H1 (cell line): ENCODE measurements at regions of chr9 and their contacts with region 1.

Region 1: DNA sequence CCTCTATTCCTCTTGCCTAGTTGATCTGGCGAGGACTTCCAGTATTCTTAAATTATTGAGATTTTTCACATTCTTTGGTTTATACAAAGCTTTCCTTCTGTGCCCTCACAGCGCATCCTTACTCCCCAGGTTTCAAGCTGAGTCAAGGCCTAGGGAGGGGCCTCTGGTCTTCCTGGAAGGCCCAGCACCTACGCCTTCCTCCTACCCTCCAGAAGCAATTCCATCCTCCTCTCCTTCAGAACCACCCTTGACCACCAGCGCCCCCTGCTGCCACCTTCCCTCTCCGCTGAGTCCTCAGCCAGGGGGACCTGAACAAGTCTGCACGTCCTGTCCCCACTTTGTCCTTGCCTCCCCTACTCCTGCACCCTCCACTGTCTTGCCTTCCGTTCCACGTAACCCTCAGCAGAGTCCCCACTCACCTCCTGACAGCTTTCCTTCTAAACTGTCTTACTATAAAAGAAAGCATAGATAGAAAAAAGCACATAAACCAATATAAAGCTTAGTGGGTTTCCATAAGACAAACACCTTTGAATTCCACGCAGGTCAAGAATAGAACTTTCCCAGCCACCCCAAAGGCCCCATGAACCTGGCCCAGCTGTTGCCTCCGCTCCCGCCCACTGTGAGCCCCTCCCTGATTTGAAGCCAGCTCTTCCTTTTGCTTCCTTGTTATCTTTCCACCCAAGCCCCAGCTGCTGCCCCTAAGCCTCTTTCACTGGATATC is 63.0 kb upstream of the CTSL start:
- DNase-seq: peak; percentile 81 to 96
- H3K4me3 ChIP-seq: no peak overlapping the region
- H3K27ac ChIP-seq: no peak overlapping the region; the same call in 1 of the 2 replicates
- H3K4me1 ChIP-seq: peaks cover 0 to 14% (median 2%) of the 10 kb centered on the region in 4 experiments; a peak in 4 of 7 replicates
- H3K27me3 ChIP-seq: no peaks in the 10 kb centered on the region
- CTCF ChIP-seq: peak; percentile 83 to 98 (median 94)
- EP300 ChIP-seq: no peak
- POLR2A ChIP-seq: no peak
- RAD21 ChIP-seq: peak; percentile 90 to 92

Region 2: DNA sequence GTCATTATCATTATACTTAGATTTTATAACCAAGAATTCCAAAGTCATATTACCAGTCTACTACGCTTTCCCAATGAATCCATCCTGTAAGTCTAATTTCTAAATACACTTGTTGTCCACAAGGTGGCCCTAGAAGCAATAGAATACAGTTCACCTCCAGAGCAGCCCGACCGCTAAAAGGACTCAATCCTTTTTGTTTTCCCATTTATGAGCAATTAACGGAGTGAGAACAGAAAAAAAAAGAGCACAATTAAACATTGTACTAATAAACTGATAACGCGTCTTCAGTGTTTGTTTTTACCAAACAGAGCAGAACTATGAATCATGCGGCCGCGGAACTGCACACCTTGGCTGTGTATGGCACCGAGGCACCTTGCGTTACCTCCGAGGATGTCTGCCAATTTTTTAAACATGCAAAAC is 326.0 kb before region 1 on chr9:
- CTCF ChIA-PET with region 1: interaction called, 20 read pairs
- POLR2A ChIA-PET with region 1: interaction called, 7 read pairs
- DNase-seq: no peak
- H3K4me3 ChIP-seq: peak overlapping the region; percentile 11 to 61 (median 43); a peak in 5 of 8 replicates
- H3K27ac ChIP-seq: no peak overlapping the region
- H3K4me1 ChIP-seq: peaks cover 3 to 14% (median 13%) of the 10 kb centered on the region in 4 experiments; a peak in 6 of 7 replicates
- H3K27me3 ChIP-seq: no peaks in the 10 kb centered on the region; a peak in 2 of 7 replicates
- CTCF ChIP-seq: peak in 2 of 3 experiments; percentile 64 to 65; a peak in 3 of 4 replicates
- EP300 ChIP-seq: no peak
- POLR2A ChIP-seq: no peak
- RAD21 ChIP-seq: peak; percentile 89

Region 3: DNA sequence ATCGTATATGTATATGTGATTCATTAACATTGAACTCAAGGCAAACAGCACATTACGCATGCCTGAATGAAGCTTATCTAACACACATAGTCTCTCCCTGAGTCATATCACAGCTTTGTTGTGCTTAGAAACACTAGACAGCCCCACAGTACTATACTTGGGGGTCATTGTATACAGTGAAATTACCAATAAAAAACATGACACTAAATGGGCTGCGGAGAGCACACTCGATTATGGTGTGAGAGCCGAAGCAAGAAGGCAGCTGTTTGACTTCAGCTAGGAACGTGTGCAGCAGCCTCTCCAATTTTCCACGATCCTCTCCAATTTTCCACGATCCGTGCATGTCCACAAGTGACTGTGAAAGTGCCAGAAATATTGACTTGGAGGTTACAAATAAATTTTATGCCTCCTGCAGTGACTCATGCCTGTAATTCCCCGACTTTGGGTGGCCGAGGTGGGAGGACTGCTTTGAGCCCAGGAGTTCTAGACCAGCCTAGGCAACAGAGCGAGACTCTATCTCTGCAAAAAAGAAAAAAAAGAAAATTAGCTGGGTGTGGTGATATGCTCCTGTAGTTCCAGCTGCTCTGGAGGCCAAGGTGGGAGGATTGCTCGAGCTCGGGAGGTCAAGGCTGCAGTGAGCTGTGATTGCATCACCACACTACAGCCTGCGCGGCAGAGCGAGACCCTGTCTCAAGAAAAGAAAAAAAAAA is 62.9 kb before region 1 on chr9:
- CTCF ChIA-PET with region 1: interaction called, 13 read pairs
- POLR2A ChIA-PET with region 1: no interaction called
- DNase-seq: no peak
- H3K4me3 ChIP-seq: no peak overlapping the region
- H3K27ac ChIP-seq: no peak overlapping the region
- H3K4me1 ChIP-seq: peaks cover 5 to 10% (median 9%) of the 10 kb centered on the region in 4 experiments
- H3K27me3 ChIP-seq: no peaks in the 10 kb centered on the region
- CTCF ChIP-seq: no peak
- EP300 ChIP-seq: no peak
- POLR2A ChIP-seq: no peak
- RAD21 ChIP-seq: no peak

Region 4: GRCh38 chr9:87678650-87679515 is 15.9 kb after region 1 on chr9:
- CTCF ChIA-PET with region 1: interaction called, 10 read pairs
- POLR2A ChIA-PET with region 1: no interaction called
- DNase-seq: peak in 1 of 2 experiments; percentile 72
- H3K4me3 ChIP-seq: no peak overlapping the region
- H3K27ac ChIP-seq: no peak overlapping the region
- H3K4me1 ChIP-seq: no peaks in the 10 kb centered on the region
- H3K27me3 ChIP-seq: no peaks in the 10 kb centered on the region
- CTCF ChIP-seq: peak; percentile 24 to 84 (median 77)
- EP300 ChIP-seq: no peak
- POLR2A ChIP-seq: no peak
- RAD21 ChIP-seq: peak; percentile 62 to 71

Region 5: DNA sequence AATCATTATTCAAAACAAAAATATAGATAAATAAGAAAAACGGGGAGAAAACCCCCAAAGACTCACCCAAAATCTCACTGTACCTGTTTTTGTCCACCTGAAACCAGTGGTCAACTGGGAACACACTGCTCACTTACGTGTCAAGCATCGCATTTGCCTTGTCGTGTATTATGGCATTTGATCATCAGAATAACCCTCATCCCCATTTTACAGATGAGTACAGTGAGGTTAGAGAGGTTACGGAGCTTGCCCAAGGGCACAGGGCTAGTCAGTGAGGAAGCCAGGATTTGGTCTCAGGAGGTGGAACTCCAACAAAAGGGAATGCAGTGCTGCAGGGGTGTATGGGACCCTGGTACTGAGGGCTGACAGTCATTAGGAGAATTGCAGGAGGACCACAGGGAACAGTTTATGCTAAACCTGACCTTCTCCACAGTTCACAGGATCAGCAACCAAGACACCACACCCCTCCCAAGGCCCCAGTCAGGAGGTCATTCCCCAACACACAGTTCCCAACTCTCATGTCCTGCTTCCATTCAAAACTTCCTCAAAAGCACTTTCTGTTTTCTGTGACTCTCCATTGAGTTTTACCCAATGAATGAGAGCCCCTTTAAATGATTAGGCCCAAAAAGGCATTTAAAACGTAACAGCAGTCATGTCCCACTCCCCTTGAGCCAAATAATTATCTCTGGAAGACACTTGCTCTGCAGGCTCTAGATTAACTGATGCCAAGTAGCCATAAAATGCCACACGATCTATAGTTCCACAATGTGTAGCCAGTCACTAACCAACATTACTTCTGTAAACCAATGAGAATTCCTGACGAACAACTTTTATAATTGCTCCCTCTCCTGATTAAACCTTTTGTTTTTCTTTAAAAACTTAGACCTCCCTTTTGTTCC is 113.8 kb after region 1 on chr9:
- CTCF ChIA-PET with region 1: no interaction called
- POLR2A ChIA-PET with region 1: no interaction called
- DNase-seq: no peak
- H3K4me3 ChIP-seq: no peak overlapping the region
- H3K27ac ChIP-seq: no peak overlapping the region
- H3K4me1 ChIP-seq: no peaks in the 10 kb centered on the region
- H3K27me3 ChIP-seq: no peaks in the 10 kb centered on the region
- CTCF ChIP-seq: no peak
- EP300 ChIP-seq: no peak
- POLR2A ChIP-seq: no peak
- RAD21 ChIP-seq: no peak

Region 6: DNA sequence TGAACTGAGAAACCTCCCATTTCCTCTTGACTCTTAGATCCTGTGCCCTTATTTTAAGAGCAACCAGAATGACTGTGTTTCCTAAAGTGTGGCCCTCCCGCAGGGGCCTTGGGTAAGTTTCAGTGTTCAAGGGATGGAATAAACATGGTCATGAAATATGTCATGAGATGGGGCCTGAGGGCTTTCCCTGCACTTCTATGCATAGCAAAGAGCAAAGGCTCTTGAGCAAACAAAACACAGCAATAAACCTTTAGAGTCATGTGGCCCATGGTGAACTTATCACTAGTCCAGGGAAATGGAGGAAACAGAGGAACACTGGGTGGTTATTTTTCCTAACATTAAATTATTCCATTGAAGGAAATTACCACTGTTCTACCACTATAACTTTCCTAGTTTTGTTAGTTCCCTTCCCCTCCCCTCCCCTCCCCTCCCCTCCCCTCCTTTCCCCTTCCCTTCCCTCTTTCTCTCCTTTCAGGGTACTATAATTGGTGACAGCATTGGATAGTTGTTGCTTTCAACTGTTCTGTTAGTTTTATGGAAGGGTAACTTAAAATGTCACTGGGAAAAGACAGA is 135.4 kb after region 1 on chr9:
- CTCF ChIA-PET with region 1: no interaction called
- POLR2A ChIA-PET with region 1: no interaction called
- DNase-seq: no peak
- H3K4me3 ChIP-seq: no peak overlapping the region
- H3K27ac ChIP-seq: no peak overlapping the region
- H3K4me1 ChIP-seq: no peaks in the 10 kb centered on the region
- H3K27me3 ChIP-seq: no peaks in the 10 kb centered on the region
- CTCF ChIP-seq: no peak
- EP300 ChIP-seq: no peak
- POLR2A ChIP-seq: no peak
- RAD21 ChIP-seq: no peak

Region 7: DNA sequence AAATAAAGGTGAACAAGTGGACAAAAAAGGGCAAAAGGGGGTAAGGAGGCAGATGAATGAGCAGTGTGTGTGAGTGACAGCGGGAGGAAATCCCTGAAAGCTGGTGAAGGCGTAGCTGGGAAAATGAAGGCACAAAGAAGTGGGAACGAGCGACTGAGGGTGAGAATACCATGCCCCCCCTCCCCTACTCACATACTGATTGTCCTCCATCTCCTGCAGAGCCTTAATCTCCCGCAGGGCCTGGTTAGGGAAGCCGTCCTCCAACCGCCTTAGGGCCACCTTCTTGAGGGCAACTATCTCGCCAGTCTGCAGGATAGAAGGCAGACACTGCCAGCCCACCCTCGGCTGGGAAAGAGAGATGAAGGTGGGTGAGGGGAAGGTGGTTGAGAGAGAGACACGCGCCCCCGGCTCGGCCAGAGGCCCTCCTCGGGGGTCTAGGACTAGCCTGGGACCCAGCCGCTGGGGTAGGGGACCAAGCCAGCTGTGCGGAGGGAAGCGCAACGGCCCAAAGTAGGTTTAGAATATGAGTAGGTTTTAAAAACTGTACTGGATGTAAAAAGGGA is 310.8 kb after region 1 on chr9:
- CTCF ChIA-PET with region 1: no interaction called
- POLR2A ChIA-PET with region 1: no interaction called
- DNase-seq: peak in 1 of 2 experiments; percentile 54
- H3K4me3 ChIP-seq: peak overlapping the region; percentile 71 to 93 (median 74)
- H3K27ac ChIP-seq: no peak overlapping the region
- H3K4me1 ChIP-seq: peaks cover 0 to 2% (median 0%) of the 10 kb centered on the region in 4 experiments; a peak in 1 of 7 replicates
- H3K27me3 ChIP-seq: no peaks in the 10 kb centered on the region; a peak in 1 of 7 replicates
- CTCF ChIP-seq: no peak
- EP300 ChIP-seq: no peak
- POLR2A ChIP-seq: no peak
- RAD21 ChIP-seq: no peak